MCF 10A (cell line): ENCODE measurements at regions of chr15 and their contacts with region 1.

Region 1: GRCh38 chr15:43225201-43225949 is 4.6 kb upstream of the EPB42 start:
- DNase-seq: peak; percentile 77
- H3K4me3 Mint-ChIP-seq: no peak overlapping the region
- H3K27ac Mint-ChIP-seq: no peak overlapping the region
- H3K4me1 Mint-ChIP-seq: peaks cover under 1% of the 10 kb centered on the region
- H3K27me3 Mint-ChIP-seq: no peaks in the 10 kb centered on the region
- CTCF ChIP-seq: peak; percentile 75

Region 2: GRCh38 chr15:43133430-43134156 is 91.8 kb before region 1 on chr15 and contains the start of gene TMEM62:
- CTCF ChIA-PET with region 1: no interaction called
- POLR2A ChIA-PET with region 1: no interaction called
- intact Hi-C with region 1: no loop called
- DNase-seq: peak; percentile 87
- H3K4me3 Mint-ChIP-seq: peak within 1 kb of the TSS; percentile 77
- H3K27ac Mint-ChIP-seq: peak within 1 kb of the TSS; percentile 82
- H3K4me1 Mint-ChIP-seq: peaks cover 10% of the 10 kb centered on the region
- H3K27me3 Mint-ChIP-seq: no peaks in the 10 kb centered on the region
- CTCF ChIP-seq: no peak
- total RNA-seq, gene TMEM62: 16.3 and 16.9 TPM in 2 replicates

Region 3: DNA sequence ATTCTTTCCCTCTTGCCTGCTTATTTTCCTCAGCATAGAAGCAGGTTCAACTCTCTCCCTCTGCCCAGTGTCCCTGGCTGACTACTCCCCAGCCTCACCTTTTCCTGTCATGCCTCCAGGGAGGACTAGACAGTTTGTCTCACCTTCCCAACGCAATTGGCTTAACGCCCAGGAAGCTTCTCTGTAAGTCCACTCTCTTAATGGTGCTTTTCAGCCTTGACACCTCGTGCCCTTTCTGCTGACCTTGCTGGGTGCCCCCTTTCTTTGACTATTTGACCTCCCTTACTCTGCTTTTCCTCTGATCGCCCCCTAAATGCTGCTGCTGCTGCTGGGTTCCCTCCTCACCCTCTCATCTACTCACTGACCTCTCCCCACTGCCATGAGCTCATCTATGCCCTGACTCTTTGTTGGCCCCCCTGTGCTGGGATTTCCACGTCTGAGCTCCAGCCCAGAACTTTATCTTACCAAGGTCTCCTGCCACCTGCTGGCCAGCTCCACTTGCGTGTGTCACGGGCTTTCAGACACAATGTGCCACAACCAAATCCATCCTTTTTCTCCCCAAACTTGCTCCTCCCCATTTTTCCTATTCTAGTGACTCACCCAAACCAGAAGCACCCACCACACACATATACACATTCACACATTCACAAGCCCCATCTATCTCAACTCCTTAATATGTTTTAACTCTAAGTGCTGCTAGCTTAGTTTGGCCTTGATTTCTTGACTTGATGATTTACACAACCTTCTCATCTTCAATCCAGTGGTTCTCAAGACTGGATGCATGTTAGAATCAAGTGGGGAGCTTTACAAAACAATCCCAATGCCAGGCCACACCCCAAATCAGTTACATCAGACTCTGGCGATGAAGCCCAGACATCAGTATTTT is 21.1 kb before region 1 on chr15:
- CTCF ChIA-PET with region 1: interaction called, 22 read pairs
- POLR2A ChIA-PET with region 1: interaction called, 4 read pairs
- intact Hi-C with region 1: no loop called
- DNase-seq: peak; percentile 69
- H3K4me3 Mint-ChIP-seq: no peak overlapping the region
- H3K27ac Mint-ChIP-seq: peak overlapping the region; percentile 17
- H3K4me1 Mint-ChIP-seq: peaks cover 11% of the 10 kb centered on the region
- H3K27me3 Mint-ChIP-seq: no peaks in the 10 kb centered on the region
- CTCF ChIP-seq: peak; percentile 39

Region 4: GRCh38 chr15:43212293-43212692 is 13.1 kb before region 1 on chr15:
- CTCF ChIA-PET with region 1: interaction called, 12 read pairs
- POLR2A ChIA-PET with region 1: no interaction called
- intact Hi-C with region 1: no loop called
- DNase-seq: no peak
- H3K4me3 Mint-ChIP-seq: no peak overlapping the region
- H3K27ac Mint-ChIP-seq: peak overlapping the region; percentile 29
- H3K4me1 Mint-ChIP-seq: no peaks in the 10 kb centered on the region
- H3K27me3 Mint-ChIP-seq: no peaks in the 10 kb centered on the region
- CTCF ChIP-seq: no peak

Region 5: GRCh38 chr15:43241100-43241499 is 15.7 kb after region 1 on chr15:
- CTCF ChIA-PET with region 1: interaction called, 11 read pairs
- POLR2A ChIA-PET with region 1: interaction called, 4 read pairs
- intact Hi-C with region 1: no loop called
- DNase-seq: no peak
- H3K4me3 Mint-ChIP-seq: no peak overlapping the region
- H3K27ac Mint-ChIP-seq: no peak overlapping the region
- H3K4me1 Mint-ChIP-seq: no peaks in the 10 kb centered on the region
- H3K27me3 Mint-ChIP-seq: peaks cover 3% of the 10 kb centered on the region
- CTCF ChIP-seq: no peak

Region 6: DNA sequence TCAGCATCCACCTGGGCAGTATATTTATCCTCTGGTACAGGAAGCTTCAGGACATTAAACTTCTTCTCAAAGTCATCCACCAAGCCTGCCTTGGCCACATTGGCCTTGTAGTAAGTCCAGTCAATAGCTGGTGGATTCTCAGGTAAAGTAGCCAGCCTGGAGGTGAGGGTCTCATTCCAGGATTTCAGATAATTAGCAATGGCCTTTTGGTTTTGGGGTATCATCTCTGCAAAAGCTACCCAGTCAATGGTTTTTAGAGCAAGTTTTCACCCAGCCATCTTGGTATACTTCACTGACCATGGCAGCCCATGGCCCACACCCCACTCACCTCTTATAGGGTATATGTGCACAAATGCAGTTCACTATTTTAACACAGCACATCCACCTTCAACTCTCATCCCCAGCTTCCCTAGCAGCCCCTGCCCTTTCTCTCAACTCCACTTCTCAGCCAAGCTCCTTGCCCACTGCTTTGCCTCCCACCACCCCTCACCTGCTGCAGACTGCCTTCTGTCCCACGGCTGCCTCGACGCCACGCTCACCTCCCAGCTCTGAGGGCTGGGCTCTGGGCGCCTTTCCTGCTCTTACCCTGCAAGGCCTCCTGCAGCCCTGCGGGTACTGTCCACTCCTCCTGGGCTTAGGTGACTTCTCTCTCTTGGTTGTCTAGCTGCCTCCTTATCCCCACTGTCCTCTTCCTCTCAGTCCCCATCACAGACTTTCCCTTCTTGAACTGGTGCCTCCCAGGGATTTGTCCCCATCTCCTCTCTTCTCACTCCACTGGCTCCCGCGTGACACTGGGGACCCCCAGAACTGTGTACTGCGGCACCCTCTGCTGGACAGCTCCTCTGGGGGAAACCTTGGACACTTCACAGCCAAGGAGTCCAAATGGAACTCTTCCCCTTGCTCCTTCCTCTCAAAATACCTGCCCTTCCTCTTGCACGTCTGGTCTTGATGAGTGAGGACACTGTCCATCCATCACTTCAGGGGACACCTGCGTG is 43.0 kb after region 1 on chr15:
- CTCF ChIA-PET with region 1: interaction called, 41 read pairs
- POLR2A ChIA-PET with region 1: interaction called, 7 read pairs
- intact Hi-C with region 1: loop called (anchors 1 kb)
- DNase-seq: peak; percentile 40
- H3K4me3 Mint-ChIP-seq: no peak overlapping the region
- H3K27ac Mint-ChIP-seq: no peak overlapping the region
- H3K4me1 Mint-ChIP-seq: peaks cover 16% of the 10 kb centered on the region
- H3K27me3 Mint-ChIP-seq: peaks cover 32% of the 10 kb centered on the region
- CTCF ChIP-seq: peak; percentile 14

Region 7: GRCh38 chr15:43275740-43276562 is 50.6 kb after region 1 on chr15:
- CTCF ChIA-PET with region 1: interaction called, 15 read pairs
- POLR2A ChIA-PET with region 1: interaction called, 9 read pairs
- intact Hi-C with region 1: no loop called
- DNase-seq: no peak
- H3K4me3 Mint-ChIP-seq: no peak overlapping the region
- H3K27ac Mint-ChIP-seq: no peak overlapping the region
- H3K4me1 Mint-ChIP-seq: peaks cover 6% of the 10 kb centered on the region
- H3K27me3 Mint-ChIP-seq: peaks cover 32% of the 10 kb centered on the region
- CTCF ChIP-seq: no peak